Activated naive CD8-positive, alpha-beta T cell treated with anti-CD3 and anti-CD28 coated beads, Interleukin-2, amount 10 ng/mL, durations not matched to agents 7 days and 5 days (primary cell): ENCODE measurements at regions of chr17 and their contacts with region 1.

Region 1: DNA sequence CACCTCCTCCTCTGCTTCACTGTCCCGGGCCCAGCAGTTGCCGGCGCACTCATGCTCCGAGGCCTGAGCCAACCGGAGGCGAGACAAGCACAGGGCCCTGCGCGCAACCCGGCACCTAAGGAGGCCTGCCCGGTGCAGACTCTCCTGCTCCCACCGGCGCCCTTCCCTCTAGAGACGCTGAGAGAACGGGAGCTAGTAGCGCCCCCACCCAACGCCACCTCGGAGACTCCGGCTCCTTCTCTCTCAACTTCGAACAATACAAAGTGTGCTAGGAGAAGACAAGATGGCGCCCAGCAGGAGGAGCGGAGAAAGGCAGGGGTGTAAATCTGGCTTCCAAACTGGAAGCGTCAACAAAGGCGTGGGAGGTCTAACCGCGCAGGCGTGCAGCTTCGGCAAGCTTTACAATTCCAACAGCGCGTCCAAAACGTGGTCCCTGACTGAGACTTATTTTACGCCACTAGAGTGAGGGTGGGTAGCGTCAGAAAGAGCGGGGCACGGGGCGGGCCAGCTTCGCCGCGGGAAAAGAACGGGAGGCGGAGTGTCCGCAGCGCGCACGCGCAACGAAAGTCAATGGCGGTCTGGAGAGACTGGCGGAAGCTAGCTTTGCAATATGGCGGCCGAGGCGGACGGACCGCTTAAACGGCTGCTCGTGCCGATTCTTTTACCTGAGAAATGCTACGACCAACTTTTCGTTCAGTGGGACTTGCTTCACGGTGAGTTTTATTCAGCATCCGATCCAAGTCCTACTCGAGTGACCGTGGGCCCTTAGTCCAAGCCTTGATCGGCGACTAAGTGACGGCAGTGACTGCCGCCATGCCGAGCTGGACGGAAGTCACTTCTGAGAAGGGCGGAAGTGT is at the start of gene MPDU1:
- DNase-seq: peak; percentile 95
- ATAC-seq: peak; percentile 85
- H3K4me3 Mint-ChIP-seq: peak within 1 kb of the TSS; percentile 99
- H3K27ac Mint-ChIP-seq: peak within 1 kb of the TSS; percentile 100
- H3K4me1 Mint-ChIP-seq: peaks cover 47% of the 10 kb centered on the region
- H3K27me3 Mint-ChIP-seq: no peaks in the 10 kb centered on the region
- total RNA-seq, gene MPDU1: 50.2 TPM

Region 2: DNA sequence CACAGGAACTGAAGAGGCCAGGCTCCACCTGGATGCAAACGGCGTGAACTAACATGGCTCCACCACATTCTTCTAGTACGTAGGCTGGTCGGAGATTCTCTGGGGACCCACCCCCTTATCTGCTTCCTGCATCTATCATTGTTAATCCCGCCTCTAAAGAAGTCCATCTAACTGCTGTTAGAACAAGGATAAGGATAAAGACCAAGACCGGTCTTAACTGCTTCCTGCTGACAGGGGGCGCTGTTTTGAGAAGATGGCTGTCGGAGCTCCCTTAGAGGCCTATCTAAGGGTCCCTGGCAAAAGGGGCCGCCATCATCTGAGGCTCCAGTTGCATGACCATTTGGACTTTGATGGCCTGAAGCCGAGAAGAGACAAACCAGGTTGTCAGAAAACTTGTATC is 60.4 kb before region 1 on chr17:
- POLR2A ChIA-PET with region 1: no interaction called
- DNase-seq: peak; percentile 42
- ATAC-seq: peak; percentile 52
- H3K4me3 Mint-ChIP-seq: no peak overlapping the region
- H3K27ac Mint-ChIP-seq: peak overlapping the region; percentile 44
- H3K4me1 Mint-ChIP-seq: peaks cover 5% of the 10 kb centered on the region
- H3K27me3 Mint-ChIP-seq: no peaks in the 10 kb centered on the region

Region 3: GRCh38 chr17:7538891-7539290 is 44.6 kb before region 1 on chr17:
- POLR2A ChIA-PET with region 1: no interaction called
- DNase-seq: no peak
- ATAC-seq: no peak
- H3K4me3 Mint-ChIP-seq: no peak overlapping the region
- H3K27ac Mint-ChIP-seq: no peak overlapping the region
- H3K4me1 Mint-ChIP-seq: peaks cover 5% of the 10 kb centered on the region
- H3K27me3 Mint-ChIP-seq: peaks cover 5% of the 10 kb centered on the region

Region 4: DNA sequence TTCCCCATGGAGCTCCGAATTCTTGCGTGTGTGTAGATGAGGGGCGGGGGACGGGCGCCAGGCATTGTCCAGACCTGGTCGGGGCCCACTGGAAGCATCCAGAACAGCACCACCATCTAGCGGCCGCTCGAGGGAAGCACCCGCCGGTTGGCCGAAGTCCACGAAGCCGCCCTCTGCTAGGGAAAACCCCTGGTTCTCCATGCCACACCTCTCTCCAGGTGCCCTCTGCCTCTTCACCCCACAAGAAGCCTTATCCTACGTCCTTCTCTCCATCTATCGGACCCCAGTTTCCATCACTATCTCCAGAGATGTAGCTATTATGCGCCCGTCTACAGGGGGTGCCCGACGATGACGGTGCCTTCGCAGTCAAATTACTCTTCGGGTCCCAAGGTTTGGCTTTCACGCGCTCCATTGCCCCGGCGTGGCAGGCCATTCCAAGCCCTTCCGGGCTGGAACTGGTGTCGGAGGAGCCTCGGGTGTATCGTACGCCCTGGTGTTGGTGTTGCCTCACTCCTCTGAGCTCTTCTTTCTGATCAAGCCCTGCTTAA is 22.4 kb before region 1 on chr17:
- POLR2A ChIA-PET with region 1: interaction called, 10 read pairs
- DNase-seq: peak; percentile 85
- ATAC-seq: peak; percentile 54
- H3K4me3 Mint-ChIP-seq: peak overlapping the region; percentile 83
- H3K27ac Mint-ChIP-seq: peak overlapping the region; percentile 87
- H3K4me1 Mint-ChIP-seq: peaks cover 55% of the 10 kb centered on the region
- H3K27me3 Mint-ChIP-seq: no peaks in the 10 kb centered on the region

Region 5: GRCh38 chr17:7572588-7573323 is 10.7 kb before region 1 on chr17:
- POLR2A ChIA-PET with region 1: interaction called, 89 read pairs
- DNase-seq: peak; percentile 100
- ATAC-seq: peak; percentile 1
- H3K4me3 Mint-ChIP-seq: peak overlapping the region; percentile 96
- H3K27ac Mint-ChIP-seq: peak overlapping the region; percentile 99
- H3K4me1 Mint-ChIP-seq: peaks cover 46% of the 10 kb centered on the region
- H3K27me3 Mint-ChIP-seq: no peaks in the 10 kb centered on the region

Region 6: GRCh38 chr17:7614422-7615264 is 31.2 kb after region 1 on chr17 and contains the start of gene FXR2:
- POLR2A ChIA-PET with region 1: interaction called, 14 read pairs
- DNase-seq: peak; percentile 97
- ATAC-seq: peak; percentile 90
- H3K4me3 Mint-ChIP-seq: peak within 1 kb of the TSS; percentile 91
- H3K27ac Mint-ChIP-seq: peak within 1 kb of the TSS; percentile 95
- H3K4me1 Mint-ChIP-seq: peaks cover 25% of the 10 kb centered on the region
- H3K27me3 Mint-ChIP-seq: no peaks in the 10 kb centered on the region
- total RNA-seq, gene FXR2: 37.7 to 38.2 TPM

Region 7: DNA sequence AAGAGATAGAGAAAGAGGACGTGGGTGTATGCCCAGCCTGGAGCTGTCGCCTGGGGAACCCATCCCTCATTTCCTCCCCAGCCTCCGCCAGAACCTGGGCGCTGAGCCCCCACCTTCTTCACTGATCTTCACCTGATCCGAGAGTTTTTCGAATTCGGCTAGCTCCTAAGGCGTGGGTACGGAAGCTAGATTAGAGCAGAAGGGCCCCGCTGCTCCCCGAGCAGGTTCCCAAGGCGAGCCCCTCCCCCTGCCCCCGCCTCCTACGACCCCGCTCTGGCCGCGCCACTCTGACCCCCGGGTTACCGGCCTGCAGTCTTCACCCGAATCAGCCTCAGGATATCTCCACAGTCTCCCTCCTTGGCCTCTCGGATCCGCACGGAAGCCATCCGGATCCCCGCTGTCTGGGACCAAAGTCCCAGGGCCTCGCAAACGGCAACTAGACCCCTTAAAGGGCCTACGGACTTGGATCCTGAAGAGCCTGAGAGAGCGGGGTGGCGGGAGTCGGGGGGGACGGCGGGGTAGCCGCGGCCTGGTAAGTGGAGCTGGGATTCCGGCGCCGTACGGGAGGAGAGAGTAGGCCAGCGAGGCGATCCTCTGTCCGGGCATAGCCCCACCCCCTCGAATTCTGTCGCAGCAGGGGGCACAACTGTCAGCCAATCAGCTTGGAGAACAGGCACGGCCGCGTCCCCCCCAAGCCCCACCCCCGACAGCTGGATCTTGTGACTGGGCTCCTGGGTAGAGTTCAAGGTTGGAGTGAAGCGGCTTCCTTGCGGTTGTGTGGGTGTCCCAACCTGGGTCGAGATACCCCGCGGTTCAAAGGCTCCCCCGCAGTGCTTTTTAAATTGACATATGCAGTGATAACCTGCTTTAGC is 44.0 kb after region 1 on chr17 and contains the start of gene SAT2:
- POLR2A ChIA-PET with region 1: interaction called, 10 read pairs
- DNase-seq: peak; percentile 80
- ATAC-seq: peak; percentile 96
- H3K4me3 Mint-ChIP-seq: peak within 1 kb of the TSS; percentile 95
- H3K27ac Mint-ChIP-seq: peak within 1 kb of the TSS; percentile 85
- H3K4me1 Mint-ChIP-seq: peaks cover 14% of the 10 kb centered on the region
- H3K27me3 Mint-ChIP-seq: no peaks in the 10 kb centered on the region
- total RNA-seq, gene SAT2: 40.0 to 41.2 TPM